ENCODE measurements at regions of chr4 and their contacts with region 1.

Region 1: GRCh38 chr4:138875891-138876613 is 139.5 kb upstream of the NOCT start:
- DNase-seq: peak; percentile 58
- ATAC-seq: peak; percentile 60
- H3K4me3 ChIP-seq: no peak overlapping the region
- H3K27ac ChIP-seq: no peak overlapping the region
- H3K4me1 ChIP-seq: peaks cover 11% of the 10 kb centered on the region
- H3K27me3 ChIP-seq: no peaks in the 10 kb centered on the region
- CTCF ChIP-seq: no peak

Region 2: GRCh38 chr4:138910607-138911336 is 34.7 kb after region 1 on chr4:
- CTCF ChIA-PET with region 1: interaction called, 4 read pairs
- POLR2A ChIA-PET with region 1: no interaction called
- intact Hi-C with region 1: loop called (anchors 2 kb)
- DNase-seq: peak; percentile 83
- ATAC-seq: peak; percentile 87
- H3K4me3 ChIP-seq: peak overlapping the region; percentile 66
- H3K27ac ChIP-seq: peak overlapping the region; percentile 95
- H3K4me1 ChIP-seq: peaks cover 35% of the 10 kb centered on the region
- H3K27me3 ChIP-seq: no peaks in the 10 kb centered on the region
- CTCF ChIP-seq: no peak